ENCODE measurements at regions of chr4 and their contacts with region 1.

Region 1: DNA sequence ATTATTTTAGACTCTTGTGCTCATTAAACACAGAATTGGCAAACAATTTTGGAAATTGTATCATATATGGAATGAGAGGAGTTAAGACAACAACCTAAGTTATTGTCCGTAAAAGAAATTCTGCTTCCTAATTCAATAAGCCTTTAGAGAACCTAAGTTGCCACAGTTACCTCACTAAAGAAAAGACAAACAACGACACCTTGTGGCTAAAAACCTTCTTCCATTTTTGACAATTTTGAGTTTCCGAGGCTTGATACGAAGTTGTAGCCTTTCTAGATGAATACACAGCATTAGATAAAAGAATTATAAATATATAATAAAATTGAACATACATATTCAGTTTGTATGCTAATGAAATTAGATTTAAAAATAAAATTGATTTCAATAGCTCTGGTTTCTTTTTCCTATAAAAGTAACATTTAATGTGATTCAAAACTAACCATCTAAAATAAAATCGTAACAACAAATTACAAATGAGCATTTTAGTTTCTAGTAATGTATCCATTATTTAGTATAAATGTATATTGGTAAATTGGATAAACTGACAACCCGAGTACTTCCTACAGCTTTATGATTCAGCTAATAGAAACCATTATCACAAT is 275.1 kb downstream of the GPM6A start:
- DNase-seq: no peak
- H3K4me3 ChIP-seq: no peak overlapping the region
- H3K27ac ChIP-seq: no peak overlapping the region
- H3K4me1 ChIP-seq: no peaks in the 10 kb centered on the region
- H3K27me3 ChIP-seq: no peaks in the 10 kb centered on the region
- CTCF ChIP-seq: peak in 2 of 4 experiments; percentile 33 to 39
- EP300 ChIP-seq: no peak
- POLR2A ChIP-seq: no peak

Region 2: GRCh38 chr4:174764105-174764729 is 772.7 kb before region 1 on chr4:
- intact Hi-C with region 1: loop called (anchors 10 kb)
- DNase-seq: no peak
- H3K4me3 ChIP-seq: no peak overlapping the region
- H3K27ac ChIP-seq: no peak overlapping the region
- H3K4me1 ChIP-seq: no peaks in the 10 kb centered on the region
- H3K27me3 ChIP-seq: no peaks in the 10 kb centered on the region
- CTCF ChIP-seq: peak in 1 of 4 experiments; percentile 58
- EP300 ChIP-seq: no peak
- POLR2A ChIP-seq: no peak